ENCODE measurements at regions of chr1 and their contacts with region 1.

Region 1: DNA sequence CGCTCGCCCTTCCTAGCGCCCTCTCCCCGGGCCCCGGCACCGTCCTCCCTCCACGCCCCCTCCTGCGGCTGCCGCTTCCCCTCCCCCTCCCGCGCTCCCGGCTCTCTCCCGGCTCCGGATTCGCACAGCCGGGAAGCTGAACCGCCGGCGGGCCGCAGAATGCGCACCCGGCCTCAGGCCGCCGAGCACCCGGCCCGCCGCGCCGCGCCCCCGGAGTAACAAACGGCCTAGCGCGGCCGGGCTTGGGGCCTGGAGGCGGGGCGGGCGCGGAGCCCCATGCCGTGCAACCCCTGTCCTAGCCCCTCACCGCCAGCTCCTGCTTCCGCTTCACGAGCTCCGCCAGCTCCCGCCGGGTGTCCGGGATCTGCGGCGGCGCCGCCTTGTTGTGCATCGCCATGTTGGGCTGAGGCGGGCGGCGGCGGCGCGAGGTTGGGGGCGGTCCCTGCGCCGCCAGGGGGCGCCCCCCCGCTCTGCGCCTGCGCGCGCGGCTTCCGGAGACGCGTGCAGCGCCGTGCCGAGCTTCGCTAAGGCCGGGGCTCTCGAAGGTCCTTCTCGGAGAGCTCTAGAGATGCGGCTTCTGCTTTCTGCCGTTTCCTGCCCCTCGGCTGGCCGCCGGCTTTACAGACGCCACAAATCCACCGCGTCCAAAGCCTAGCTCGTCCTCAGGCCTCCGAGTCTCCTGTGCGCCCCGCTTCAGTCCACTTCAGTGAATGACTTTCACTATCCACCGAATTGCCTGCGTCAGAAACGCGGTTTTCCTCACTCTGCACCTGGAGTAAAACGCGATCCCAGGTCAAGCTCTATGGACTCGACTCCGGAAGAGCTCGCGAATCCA is at the start of gene MEAF6:
- DNase-seq: peak; percentile 79 to 88 (median 85)
- H3K4me3 ChIP-seq: peak within 1 kb of the TSS; percentile 71 to 98 (median 87)
- H3K27ac ChIP-seq: peak within 1 kb of the TSS; percentile 54 to 89
- H3K4me1 ChIP-seq: peaks cover 11 to 21% (median 15%) of the 10 kb centered on the region in 4 experiments
- H3K27me3 ChIP-seq: no peaks in the 10 kb centered on the region

Region 2: DNA sequence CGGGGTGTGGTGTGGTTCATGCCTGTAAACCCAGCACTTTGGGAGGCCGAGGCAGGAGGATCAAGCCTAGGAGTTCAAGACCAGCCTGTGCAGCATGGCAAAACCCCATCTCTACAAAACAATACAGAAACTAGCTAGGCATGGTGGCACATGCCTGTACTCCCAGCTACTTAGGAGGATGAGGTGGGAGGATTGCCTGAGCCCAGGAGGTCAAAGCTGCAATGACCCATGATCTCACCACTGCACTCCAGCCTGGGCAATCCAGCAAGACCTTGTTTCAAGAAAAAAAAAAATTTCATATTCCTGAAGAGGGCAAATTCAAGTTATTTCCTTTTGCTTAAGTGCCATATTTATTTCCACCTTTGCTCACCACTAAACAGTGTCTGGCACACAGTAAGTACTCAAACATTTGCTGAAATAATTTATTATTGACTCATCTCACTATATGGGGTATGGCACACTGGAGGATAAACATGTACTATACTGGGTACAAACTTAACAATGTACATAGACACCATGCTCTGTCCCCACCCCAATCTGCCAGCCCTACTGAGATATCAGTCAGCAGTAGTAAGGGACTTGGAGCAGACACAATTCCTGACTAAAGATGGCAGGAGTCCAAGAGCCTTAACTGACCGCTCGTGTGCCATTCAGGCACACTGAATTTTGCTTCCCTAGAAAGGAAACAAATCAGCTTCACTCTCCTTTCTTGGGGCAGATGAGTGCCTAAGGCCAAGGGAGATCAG is 15.5 kb before region 1 on chr1:
- CTCF ChIA-PET with region 1: interaction called, 13 read pairs
- POLR2A ChIA-PET with region 1: no interaction called
- DNase-seq: no peak
- H3K4me3 ChIP-seq: no peak overlapping the region
- H3K27ac ChIP-seq: peak overlapping the region in 1 of 2 experiments; percentile 12
- H3K4me1 ChIP-seq: no peaks in the 10 kb centered on the region
- H3K27me3 ChIP-seq: no peaks in the 10 kb centered on the region